MCF 10A (cell line): ENCODE measurements at regions of chr19 and their contacts with region 1.

Region 1: DNA sequence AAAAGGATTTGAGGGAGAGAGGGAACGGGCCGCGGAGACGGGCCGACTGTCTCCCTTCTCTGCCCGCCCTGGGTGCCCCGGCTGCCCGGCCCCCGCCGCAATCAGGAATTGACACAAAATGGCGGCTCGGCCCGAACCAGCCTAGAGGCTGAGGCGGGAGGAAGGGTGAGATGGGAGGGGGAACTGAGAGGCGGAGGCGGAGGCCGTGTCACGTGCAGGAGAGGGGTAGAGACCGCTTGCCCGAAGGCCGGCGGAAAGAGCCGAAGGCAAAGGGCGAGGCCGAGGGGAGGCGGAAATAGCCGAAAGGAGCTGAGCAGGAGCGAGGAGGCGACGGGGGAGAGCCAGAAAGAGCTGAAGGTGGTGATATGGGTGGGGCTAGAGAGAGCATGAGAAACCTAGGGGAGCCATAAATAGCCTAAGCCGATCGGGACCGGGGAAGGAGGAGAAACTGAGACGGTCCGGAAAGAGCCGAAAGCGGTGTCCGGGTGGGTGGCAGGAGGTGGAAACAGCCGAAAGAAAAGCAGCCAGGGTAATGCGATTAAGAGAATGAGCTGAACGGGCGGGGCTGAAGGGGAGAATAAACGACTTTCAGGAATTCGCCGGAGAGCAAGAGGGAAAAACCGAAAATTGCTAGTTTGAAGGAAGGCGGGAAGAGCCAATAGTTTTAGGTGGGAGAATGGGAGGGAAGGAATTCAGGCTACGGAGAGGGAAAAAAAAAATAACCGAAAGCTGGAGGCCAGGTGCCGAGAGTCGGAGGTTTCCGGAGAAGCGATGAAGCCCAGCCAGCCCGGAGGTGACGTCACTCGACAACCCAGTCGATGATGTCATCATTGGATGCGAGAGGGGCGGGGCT is at the start of gene ZC3H4:
- DNase-seq: peak; percentile 100
- H3K4me3 Mint-ChIP-seq: peak within 1 kb of the TSS; percentile 94
- H3K27ac Mint-ChIP-seq: peak within 1 kb of the TSS; percentile 99
- H3K4me1 Mint-ChIP-seq: peaks cover 22% of the 10 kb centered on the region
- H3K27me3 Mint-ChIP-seq: no peaks in the 10 kb centered on the region
- CTCF ChIP-seq: no peak
- total RNA-seq, gene ZC3H4: 41.4 and 41.8 TPM in 2 replicates

Region 2: GRCh38 chr19:46890423-46891170 is 222.6 kb before region 1 on chr19:
- CTCF ChIA-PET with region 1: no interaction called
- POLR2A ChIA-PET with region 1: no interaction called
- intact Hi-C with region 1: no loop called
- DNase-seq: peak; percentile 41
- H3K4me3 Mint-ChIP-seq: no peak overlapping the region
- H3K27ac Mint-ChIP-seq: peak overlapping the region; percentile 57
- H3K4me1 Mint-ChIP-seq: peaks cover 45% of the 10 kb centered on the region
- H3K27me3 Mint-ChIP-seq: no peaks in the 10 kb centered on the region
- CTCF ChIP-seq: no peak

Region 3: DNA sequence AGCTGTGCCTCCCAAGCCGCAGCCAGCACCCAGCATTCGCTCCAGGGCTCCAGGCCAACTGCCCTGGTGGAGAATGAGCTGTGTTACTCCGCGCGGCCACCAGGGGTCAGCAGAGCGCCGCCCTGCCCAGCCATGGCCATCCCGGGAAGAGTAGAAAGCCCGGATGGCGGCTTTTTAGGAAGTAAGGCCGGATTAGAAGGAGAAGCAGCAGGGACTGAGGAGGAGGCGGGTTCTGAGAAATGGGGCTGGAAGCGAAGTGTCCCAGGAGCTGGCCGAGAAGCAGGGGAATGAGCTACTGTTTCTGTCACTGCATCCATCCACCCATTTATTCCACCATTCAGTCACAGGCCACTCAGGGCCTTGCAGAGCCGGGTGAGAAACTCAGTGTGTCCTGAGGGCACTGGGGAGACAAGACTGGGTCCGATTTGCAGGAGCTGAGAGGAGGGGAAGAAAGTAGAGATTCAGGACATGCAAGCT is 100.1 kb before region 1 on chr19:
- CTCF ChIA-PET with region 1: interaction called, 3 read pairs
- POLR2A ChIA-PET with region 1: interaction called, 17 read pairs
- intact Hi-C with region 1: no loop called
- DNase-seq: peak; percentile 87
- H3K4me3 Mint-ChIP-seq: peak overlapping the region; percentile 45
- H3K27ac Mint-ChIP-seq: no peak overlapping the region
- H3K4me1 Mint-ChIP-seq: peaks cover 12% of the 10 kb centered on the region
- H3K27me3 Mint-ChIP-seq: no peaks in the 10 kb centered on the region
- CTCF ChIP-seq: peak; percentile 93

Region 4: GRCh38 chr19:47075179-47075810 is 37.9 kb before region 1 on chr19:
- CTCF ChIA-PET with region 1: interaction called, 5 read pairs
- POLR2A ChIA-PET with region 1: interaction called, 13 read pairs
- intact Hi-C with region 1: no loop called
- DNase-seq: no peak
- H3K4me3 Mint-ChIP-seq: no peak overlapping the region
- H3K27ac Mint-ChIP-seq: no peak overlapping the region
- H3K4me1 Mint-ChIP-seq: no peaks in the 10 kb centered on the region
- H3K27me3 Mint-ChIP-seq: no peaks in the 10 kb centered on the region
- CTCF ChIP-seq: no peak

Region 5: DNA sequence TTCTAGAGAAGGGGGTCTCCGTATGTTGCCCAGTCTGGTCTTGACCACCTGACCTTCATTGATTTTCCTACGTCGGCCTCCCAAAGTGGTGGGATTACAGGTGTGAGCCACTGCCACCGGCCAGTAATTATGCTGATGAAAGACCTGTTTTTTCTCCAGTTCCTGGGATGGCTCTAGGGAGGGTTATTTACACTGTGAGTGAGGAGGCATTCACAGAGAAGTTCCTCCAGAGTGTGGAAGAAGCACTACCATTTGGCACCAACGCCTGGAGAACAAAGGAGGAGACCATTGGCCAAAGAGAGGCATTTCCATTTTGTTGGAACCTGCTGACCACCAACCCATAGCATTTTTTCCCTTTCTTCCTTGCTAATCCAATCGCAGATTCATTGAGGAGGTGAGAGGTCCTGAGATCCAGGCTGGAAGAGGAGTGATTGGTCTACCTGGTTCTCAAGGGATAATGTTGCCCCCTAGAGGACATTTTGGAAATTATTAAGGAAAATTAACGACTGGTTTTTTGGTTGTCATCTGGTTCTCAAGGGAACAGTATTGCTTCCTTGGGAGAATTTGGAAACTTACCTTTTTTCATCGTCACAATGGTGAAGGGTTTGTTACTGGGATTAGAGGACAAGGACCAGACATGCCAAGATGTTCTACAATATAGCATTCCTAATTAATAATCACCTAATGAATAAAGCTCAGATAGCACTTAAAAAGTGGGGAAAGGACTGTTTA is 11.9 kb after region 1 on chr19:
- CTCF ChIA-PET with region 1: interaction called, 11 read pairs
- POLR2A ChIA-PET with region 1: interaction called, 50 read pairs
- intact Hi-C with region 1: no loop called
- DNase-seq: peak; percentile 82
- H3K4me3 Mint-ChIP-seq: no peak overlapping the region
- H3K27ac Mint-ChIP-seq: no peak overlapping the region
- H3K4me1 Mint-ChIP-seq: peaks cover 23% of the 10 kb centered on the region
- H3K27me3 Mint-ChIP-seq: no peaks in the 10 kb centered on the region
- CTCF ChIP-seq: peak; percentile 69

Region 6: DNA sequence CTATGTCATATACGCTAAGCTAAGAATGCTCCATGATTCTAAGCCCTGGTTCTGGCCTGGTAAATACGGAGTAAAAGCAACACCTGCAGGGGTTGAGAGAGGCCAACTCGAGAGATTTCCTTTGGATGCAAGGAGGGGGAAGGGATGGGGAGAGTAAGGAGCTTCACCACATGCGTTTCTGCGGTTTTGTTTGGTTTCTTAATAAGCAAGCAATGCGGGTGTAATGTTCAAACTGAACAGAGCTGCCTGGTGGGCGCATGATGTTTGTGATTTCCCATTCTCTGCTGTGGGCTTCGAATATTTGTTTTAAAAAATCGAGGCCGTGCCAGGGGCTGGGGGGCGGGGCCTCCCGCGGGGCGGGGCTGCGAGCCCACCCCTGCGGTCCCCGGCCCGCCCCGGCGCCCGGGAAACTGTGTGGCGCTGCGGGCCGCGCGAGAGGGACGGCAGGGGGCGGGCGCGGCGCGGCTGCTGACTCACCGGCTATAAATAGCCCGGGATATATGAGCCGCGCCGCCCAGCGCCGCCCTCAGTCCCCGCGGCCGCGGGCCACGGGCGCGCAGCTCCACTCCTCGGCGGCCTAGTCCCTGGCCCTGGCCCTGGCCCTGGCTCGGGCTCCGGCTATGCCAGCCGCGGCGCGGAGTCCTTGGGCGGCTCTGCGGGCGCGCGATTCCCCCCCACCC is 112.7 kb after region 1 on chr19:
- CTCF ChIA-PET with region 1: no interaction called
- POLR2A ChIA-PET with region 1: interaction called, 24 read pairs
- intact Hi-C with region 1: no loop called
- DNase-seq: peak; percentile 85
- H3K4me3 Mint-ChIP-seq: peak overlapping the region; percentile 45
- H3K27ac Mint-ChIP-seq: no peak overlapping the region
- H3K4me1 Mint-ChIP-seq: peaks cover 6% of the 10 kb centered on the region
- H3K27me3 Mint-ChIP-seq: no peaks in the 10 kb centered on the region
- CTCF ChIP-seq: peak; percentile 26

Region 7: DNA sequence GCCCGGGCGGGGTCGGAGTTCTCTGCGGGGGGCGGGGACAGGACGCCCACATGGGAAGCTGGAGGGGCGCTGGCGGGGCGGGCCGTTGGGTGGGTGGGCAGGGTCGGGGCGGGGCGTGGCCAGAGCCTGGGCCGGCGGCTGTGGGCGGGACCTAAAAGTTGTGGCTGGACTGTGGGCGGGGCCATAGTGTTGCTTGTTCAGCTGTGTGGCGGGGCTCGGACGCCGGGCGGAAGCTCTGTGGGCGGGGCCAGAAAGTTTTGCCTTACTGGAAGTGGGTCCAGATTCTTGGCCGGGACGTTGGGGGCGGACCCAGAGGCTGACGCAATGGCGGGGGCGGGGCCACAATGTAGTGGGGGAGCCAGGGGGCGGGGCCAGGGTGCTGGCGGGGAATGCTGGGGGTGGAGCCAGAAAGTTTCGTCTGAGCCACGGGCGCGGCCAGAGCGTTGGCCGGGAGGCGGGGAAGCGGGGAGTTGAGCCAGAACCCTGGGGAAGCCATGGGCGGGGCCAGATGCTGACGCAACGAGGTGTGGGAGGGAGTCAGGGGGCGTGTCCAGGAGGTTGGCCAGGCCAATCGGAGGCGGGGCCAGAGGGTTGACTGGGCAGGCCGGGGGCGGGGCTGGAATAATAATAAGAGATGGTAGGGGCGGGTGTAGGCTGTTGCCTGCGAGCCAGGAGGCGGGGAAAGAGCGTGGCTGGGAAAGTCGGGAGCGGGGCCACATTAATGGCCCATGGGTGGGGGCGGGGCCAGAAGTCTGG is 143.6 kb after region 1 on chr19:
- CTCF ChIA-PET with region 1: no interaction called
- POLR2A ChIA-PET with region 1: interaction called, 17 read pairs
- intact Hi-C with region 1: no loop called
- DNase-seq: peak; percentile 99
- H3K4me3 Mint-ChIP-seq: peak overlapping the region; percentile 97
- H3K27ac Mint-ChIP-seq: peak overlapping the region; percentile 99
- H3K4me1 Mint-ChIP-seq: peaks cover 26% of the 10 kb centered on the region
- H3K27me3 Mint-ChIP-seq: no peaks in the 10 kb centered on the region
- CTCF ChIP-seq: no peak

Region 8: GRCh38 chr19:47762615-47763308 is 649.5 kb after region 1 on chr19:
- CTCF ChIA-PET with region 1: no interaction called
- POLR2A ChIA-PET with region 1: no interaction called
- intact Hi-C with region 1: no loop called
- DNase-seq: no peak
- H3K4me3 Mint-ChIP-seq: no peak overlapping the region
- H3K27ac Mint-ChIP-seq: no peak overlapping the region
- H3K4me1 Mint-ChIP-seq: no peaks in the 10 kb centered on the region
- H3K27me3 Mint-ChIP-seq: no peaks in the 10 kb centered on the region
- CTCF ChIP-seq: no peak